ENCODE measurements at regions of chr4 and their contacts with region 1.

Region 1: DNA sequence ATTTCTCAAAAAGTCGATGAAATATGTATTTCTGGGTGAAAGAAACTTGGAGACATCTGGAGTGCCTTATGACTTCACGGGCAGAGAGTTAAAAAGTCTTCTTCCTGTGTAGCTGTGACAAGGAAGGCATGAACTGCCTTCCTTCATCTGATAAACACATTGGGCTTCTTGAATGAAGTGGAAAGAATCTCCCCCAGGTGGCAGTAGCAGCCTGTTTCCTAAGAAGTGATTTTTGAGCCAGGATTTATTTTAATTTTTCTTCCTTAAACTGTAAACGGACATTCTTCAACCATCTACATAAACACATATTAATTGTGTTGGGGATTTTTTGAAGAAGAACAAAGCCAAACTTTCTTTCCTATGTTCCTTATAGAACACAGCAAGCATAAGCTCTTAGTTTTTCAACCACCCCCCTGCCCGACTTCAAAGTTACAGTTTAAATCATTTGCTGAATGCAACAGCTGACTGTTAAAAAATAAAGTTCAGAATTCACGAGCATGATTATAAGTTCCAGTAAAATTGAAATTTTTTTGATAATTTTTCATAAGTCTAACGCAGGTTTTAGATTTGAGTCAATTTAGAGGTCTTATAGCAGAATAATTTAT is 980 bp upstream of the GIMD1 start:
- DNase-seq: no peak
- H3K4me3 Mint-ChIP-seq: no peak overlapping the region
- H3K27ac Mint-ChIP-seq: no peak overlapping the region
- H3K4me1 Mint-ChIP-seq: no peaks in the 10 kb centered on the region
- H3K27me3 Mint-ChIP-seq: peaks cover 16% of the 10 kb centered on the region

Region 2: DNA sequence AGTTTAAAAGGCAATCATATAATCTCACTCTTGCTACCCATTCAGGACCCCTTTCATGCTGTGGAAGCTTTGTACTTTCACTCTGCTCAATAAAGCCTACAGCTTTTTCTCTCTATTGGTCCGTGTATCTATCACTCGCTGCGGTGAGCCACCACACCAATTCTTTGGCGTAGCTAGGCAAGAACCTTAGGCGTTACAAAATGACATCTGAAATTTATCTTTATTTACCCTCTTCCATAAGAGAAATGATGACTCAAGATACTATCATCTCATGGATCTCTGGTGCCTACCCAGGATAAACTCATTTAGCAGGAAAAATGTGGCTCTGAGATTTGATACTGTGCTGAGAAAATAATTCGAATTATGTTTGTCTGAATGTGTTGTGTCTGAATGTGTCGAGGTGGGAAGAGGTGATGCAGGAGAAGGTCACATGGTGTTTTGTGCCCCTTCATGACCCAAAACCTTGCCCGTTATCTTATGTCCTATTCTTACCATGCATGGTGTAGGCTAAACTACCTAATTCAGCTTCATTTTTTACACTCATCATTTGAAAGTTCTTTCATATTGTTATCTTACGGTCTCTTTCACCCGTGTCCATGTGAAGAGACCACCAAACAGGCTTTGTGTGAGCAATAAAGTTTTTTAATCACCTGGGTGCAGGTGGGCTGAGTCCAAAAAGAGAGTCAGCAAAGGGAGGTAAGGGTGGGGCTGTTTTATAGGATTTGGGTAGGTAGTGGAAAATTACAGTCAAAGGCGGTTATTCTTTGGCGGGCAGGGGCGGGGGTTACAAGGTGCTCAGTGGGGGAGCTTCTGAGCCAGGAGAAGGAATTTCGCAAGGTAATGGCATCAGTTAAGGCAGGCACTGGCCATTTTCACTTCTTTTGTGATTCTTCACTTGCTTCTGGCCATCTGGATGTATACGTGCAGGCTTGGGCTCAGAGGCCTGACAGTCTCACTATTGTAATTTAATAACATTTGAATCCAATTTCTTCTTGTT is 40.6 kb after region 1 on chr4:
- intact Hi-C with region 1: no loop called
- DNase-seq: no peak
- H3K4me3 Mint-ChIP-seq: no peak overlapping the region
- H3K27ac Mint-ChIP-seq: no peak overlapping the region
- H3K4me1 Mint-ChIP-seq: no peaks in the 10 kb centered on the region
- H3K27me3 Mint-ChIP-seq: no peaks in the 10 kb centered on the region

Region 3: GRCh38 chr4:106809076-106809475 is 439.5 kb after region 1 on chr4:
- intact Hi-C with region 1: no loop called
- DNase-seq: no peak
- H3K4me3 Mint-ChIP-seq: no peak overlapping the region
- H3K27ac Mint-ChIP-seq: no peak overlapping the region
- H3K4me1 Mint-ChIP-seq: no peaks in the 10 kb centered on the region
- H3K27me3 Mint-ChIP-seq: no peaks in the 10 kb centered on the region

Region 4: GRCh38 chr4:106875340-106875739 is 505.8 kb after region 1 on chr4:
- intact Hi-C with region 1: no loop called
- DNase-seq: no peak
- H3K4me3 Mint-ChIP-seq: no peak overlapping the region
- H3K27ac Mint-ChIP-seq: no peak overlapping the region
- H3K4me1 Mint-ChIP-seq: no peaks in the 10 kb centered on the region
- H3K27me3 Mint-ChIP-seq: no peaks in the 10 kb centered on the region

Region 5: DNA sequence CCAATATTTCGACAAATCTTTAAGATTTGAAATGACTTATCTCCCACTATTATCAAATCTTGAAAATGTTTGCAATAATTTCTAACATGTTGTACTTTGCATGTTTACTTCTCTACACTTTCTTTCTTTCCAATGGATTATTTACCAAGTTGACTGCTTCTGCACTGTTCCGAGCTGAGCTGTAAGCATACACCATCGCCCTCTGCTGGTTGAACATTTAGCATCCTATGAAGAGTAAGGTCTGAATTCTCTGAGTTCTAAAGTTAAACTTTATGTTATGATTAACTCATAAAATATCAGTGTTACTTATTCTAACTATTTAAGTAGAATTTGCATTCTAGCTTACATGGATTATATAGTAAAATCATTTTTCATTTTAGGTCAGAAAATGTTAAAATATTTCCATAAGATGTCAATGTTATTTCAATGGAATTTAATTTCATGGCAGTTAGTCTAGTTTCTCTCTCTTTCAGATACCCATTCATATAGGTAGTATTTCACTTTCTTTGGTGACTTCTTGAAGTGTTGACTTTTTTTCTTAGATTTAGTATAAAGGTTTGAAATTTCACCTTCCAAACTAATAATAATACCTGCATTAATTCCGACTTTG is 529.2 kb after region 1 on chr4:
- intact Hi-C with region 1: loop called (anchors 1 kb)
- DNase-seq: no peak
- H3K4me3 Mint-ChIP-seq: no peak overlapping the region
- H3K27ac Mint-ChIP-seq: no peak overlapping the region
- H3K4me1 Mint-ChIP-seq: no peaks in the 10 kb centered on the region
- H3K27me3 Mint-ChIP-seq: no peaks in the 10 kb centered on the region

Region 6: GRCh38 chr4:107183155-107183774 is 813.7 kb after region 1 on chr4:
- intact Hi-C with region 1: loop called (anchors 2 kb)
- DNase-seq: no peak
- H3K4me3 Mint-ChIP-seq: no peak overlapping the region
- H3K27ac Mint-ChIP-seq: no peak overlapping the region
- H3K4me1 Mint-ChIP-seq: no peaks in the 10 kb centered on the region
- H3K27me3 Mint-ChIP-seq: no peaks in the 10 kb centered on the region